ENCODE measurements at regions of chr22 and their contacts with region 1.

Region 1: GRCh38 chr22:39319270-39320022 is at the start of gene RPL3:
- DNase-seq: peak; percentile 77 to 95 (median 84)
- ATAC-seq: peak; percentile 79
- H3K4me3 ChIP-seq: peak within 1 kb of the TSS; percentile 69
- H3K27ac ChIP-seq: peak within 1 kb of the TSS; percentile 100
- H3K4me1 ChIP-seq: peaks cover 13 to 20% of the 10 kb centered on the region in 2 experiments; a peak in 4 of 5 replicates
- H3K27me3 ChIP-seq: no peaks in the 10 kb centered on the region
- CTCF ChIP-seq: 0 out of 6 replicates have a peak, but pooled peaks of 1 of the 3 experiments have one; percentile 12
- EP300 ChIP-seq: peak; percentile 25; the same call in 1 of the 2 replicates
- POLR2A ChIP-seq: peak; percentile 100
- RAD21 ChIP-seq: no peak
- polyA plus RNA-seq, gene RPL3: 3,338 to 4,066 TPM

Region 2: GRCh38 chr22:39170825-39171622 is 148.4 kb before region 1 on chr22:
- CTCF ChIA-PET with region 1: interaction called, 9 read pairs
- POLR2A ChIA-PET with region 1: interaction called, 24 read pairs
- in situ Hi-C with region 1: no loop called
- intact Hi-C with region 1: no loop called
- DNase-seq: peak; percentile 71 to 79 (median 76)
- ATAC-seq: peak; percentile 98
- H3K4me3 ChIP-seq: no peak overlapping the region
- H3K27ac ChIP-seq: no peak overlapping the region
- H3K4me1 ChIP-seq: peaks cover 12 to 23% of the 10 kb centered on the region in 2 experiments; a peak in 4 of 5 replicates
- H3K27me3 ChIP-seq: no peaks in the 10 kb centered on the region
- CTCF ChIP-seq: peak; percentile 80 to 93 (median 87)
- EP300 ChIP-seq: no peak
- POLR2A ChIP-seq: no peak
- RAD21 ChIP-seq: peak; percentile 88 to 96

Region 3: DNA sequence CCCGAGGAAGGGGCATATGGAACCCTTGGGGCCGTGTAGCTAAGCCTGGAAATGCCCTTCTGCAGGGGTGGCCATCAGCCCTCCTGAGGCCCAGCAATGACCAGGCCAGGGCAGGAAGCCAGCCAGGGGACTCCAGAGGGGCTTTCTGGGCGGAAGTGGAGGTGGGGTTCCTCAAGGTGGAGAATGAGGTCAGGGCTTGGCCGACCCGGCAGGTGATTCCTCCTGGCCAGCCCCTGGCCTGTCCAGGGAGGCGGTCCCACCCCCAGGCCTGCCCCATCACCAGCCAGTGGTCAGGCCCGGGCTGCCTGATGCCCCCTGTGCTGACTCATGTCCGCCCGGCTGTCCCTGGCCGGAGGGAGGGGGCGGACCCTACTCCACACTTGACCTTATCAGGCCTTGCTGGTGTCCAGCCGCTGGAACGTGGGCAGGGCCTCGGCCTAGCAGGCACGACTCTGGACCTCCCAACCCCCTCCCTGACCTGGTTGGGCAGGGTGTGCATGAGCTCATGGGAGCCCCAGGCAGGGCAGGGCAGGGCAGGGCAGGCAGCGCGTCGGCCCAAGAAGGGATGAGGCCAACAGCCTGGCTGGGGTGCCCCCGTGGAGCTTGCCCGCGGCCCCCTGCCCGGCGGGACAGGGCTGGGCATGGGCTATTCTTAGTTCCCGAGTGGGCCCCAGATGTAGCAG is 36.0 kb before region 1 on chr22:
- CTCF ChIA-PET with region 1: no interaction called
- POLR2A ChIA-PET with region 1: interaction called, 12 read pairs
- in situ Hi-C with region 1: no loop called
- intact Hi-C with region 1: no loop called
- DNase-seq: peak; percentile 92 to 96 (median 94)
- ATAC-seq: peak; percentile 97
- H3K4me3 ChIP-seq: no peak overlapping the region
- H3K27ac ChIP-seq: peak overlapping the region; percentile 91
- H3K4me1 ChIP-seq: peaks cover 32 to 33% of the 10 kb centered on the region in 2 experiments
- H3K27me3 ChIP-seq: no peaks in the 10 kb centered on the region
- CTCF ChIP-seq: no peak
- EP300 ChIP-seq: peak; percentile 83
- POLR2A ChIP-seq: 0 out of 2 replicates have a peak, but pooled peaks have one; percentile 43
- RAD21 ChIP-seq: no peak

Region 4: DNA sequence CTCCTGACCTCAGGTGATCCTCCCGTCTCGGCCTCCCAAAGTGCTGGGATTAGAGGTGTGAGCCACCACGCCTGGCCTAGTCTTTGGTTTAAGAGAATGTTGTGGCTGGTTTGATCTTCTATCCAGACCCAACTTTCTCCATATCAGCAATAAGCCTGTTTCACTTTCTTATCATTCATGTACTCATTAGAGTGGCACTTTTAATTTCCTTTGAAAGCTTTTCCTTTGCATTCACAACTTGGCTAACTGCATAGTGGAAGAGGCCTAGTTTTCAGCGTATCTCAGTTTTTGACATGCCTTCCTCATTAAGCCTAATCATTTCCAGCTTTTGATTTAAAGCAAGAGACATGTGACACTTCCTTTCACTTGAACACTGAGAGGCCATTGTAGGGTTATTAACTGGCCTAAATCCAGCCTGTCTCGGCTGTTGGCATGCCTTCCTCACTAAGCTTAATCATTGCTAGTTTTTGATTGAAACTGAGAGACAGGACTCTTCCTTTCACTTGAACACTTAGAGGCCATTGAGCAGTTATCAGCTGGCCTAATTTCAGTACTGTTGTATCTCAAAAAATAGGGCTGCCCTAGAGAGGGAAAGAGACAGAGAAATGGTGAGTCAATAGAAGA is 13.1 kb after region 1 on chr22:
- CTCF ChIA-PET with region 1: no interaction called
- POLR2A ChIA-PET with region 1: interaction called, 136 read pairs
- in situ Hi-C with region 1: no loop called
- intact Hi-C with region 1: no loop called
- DNase-seq: no peak
- ATAC-seq: no peak
- H3K4me3 ChIP-seq: no peak overlapping the region
- H3K27ac ChIP-seq: no peak overlapping the region
- H3K4me1 ChIP-seq: peaks cover 0 to 7% of the 10 kb centered on the region in 2 experiments; a peak in 2 of 5 replicates
- H3K27me3 ChIP-seq: no peaks in the 10 kb centered on the region
- CTCF ChIP-seq: no peak
- EP300 ChIP-seq: no peak
- POLR2A ChIP-seq: no peak
- RAD21 ChIP-seq: no peak

Region 5: GRCh38 chr22:39380999-39381755 is 61.7 kb after region 1 on chr22:
- CTCF ChIA-PET with region 1: no interaction called
- POLR2A ChIA-PET with region 1: interaction called, 10 read pairs
- in situ Hi-C with region 1: no loop called
- intact Hi-C with region 1: no loop called
- DNase-seq: no peak
- ATAC-seq: peak; percentile 59
- H3K4me3 ChIP-seq: no peak overlapping the region
- H3K27ac ChIP-seq: no peak overlapping the region
- H3K4me1 ChIP-seq: peaks cover 0 to 30% of the 10 kb centered on the region in 2 experiments; a peak in 3 of 5 replicates
- H3K27me3 ChIP-seq: no peaks in the 10 kb centered on the region
- CTCF ChIP-seq: no peak
- EP300 ChIP-seq: no peak
- POLR2A ChIP-seq: no peak
- RAD21 ChIP-seq: no peak

Measured in K562 (cell line).